ENCODE measurements at regions of chr1 and their contacts with region 1.

Region 1: GRCh38 chr1:220902916-220903315 is 23.7 kb downstream of the HLX start:
- DNase-seq: peak; percentile 25
- ATAC-seq: no peak
- H3K4me3 ChIP-seq: no peak overlapping the region
- H3K27ac ChIP-seq: no peak overlapping the region
- H3K4me1 ChIP-seq: 0 out of 2 replicates have a peak, but pooled peaks cover 2% of the 10 kb centered on the region
- H3K27me3 ChIP-seq: 0 out of 2 replicates have a peak, but pooled peaks cover 2% of the 10 kb centered on the region
- CTCF ChIP-seq: no peak
- POLR2A ChIP-seq: no peak
- RAD21 ChIP-seq: no peak

Region 2: DNA sequence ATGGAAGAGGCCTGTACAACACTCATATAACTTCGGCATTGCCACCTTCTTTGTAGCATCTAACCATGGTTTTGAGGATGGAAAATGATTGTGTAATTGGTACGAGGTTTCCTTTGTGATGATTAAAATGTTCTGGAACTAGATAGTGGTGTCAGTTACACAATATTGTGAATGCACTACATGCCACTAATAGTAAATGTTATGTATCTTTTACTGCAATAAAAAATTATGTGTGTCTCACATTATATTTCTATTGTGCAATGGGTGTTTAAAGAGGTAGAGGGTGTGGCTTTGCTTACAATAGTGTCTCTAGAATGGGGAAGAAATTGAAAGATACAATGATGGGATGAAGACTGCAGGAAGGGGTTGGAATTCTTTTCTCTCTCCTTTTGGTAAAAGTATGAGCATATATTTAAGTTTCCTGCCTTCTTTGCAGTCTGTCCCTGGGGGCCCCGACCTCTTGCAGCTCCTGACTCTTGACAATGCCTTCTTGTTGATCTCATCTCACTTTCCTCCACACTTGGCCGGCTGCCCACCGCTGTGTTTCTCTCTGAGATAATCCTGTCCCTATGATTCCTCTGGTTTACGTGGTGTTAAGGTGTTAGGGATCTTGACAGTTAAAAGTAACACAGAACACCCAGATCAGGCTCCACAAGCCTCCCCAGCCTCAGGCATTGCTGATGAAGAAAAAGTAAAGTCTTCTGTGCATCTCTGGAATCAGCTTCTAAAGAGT is 76.9 kb before region 1 on chr1:
- CTCF ChIA-PET with region 1: no interaction called
- POLR2A ChIA-PET with region 1: no interaction called
- dilution Hi-C with region 1: no loop called
- in situ Hi-C with region 1: no loop called
- intact Hi-C with region 1: no loop called
- DNase-seq: no peak
- ATAC-seq: no peak
- H3K4me3 ChIP-seq: no peak overlapping the region
- H3K27ac ChIP-seq: peak overlapping the region; percentile 12; the same call in 1 of the 2 replicates
- H3K4me1 ChIP-seq: peaks cover 19% of the 10 kb centered on the region
- H3K27me3 ChIP-seq: peaks cover 4% of the 10 kb centered on the region
- CTCF ChIP-seq: no peak
- POLR2A ChIP-seq: no peak
- RAD21 ChIP-seq: no peak

Region 3: DNA sequence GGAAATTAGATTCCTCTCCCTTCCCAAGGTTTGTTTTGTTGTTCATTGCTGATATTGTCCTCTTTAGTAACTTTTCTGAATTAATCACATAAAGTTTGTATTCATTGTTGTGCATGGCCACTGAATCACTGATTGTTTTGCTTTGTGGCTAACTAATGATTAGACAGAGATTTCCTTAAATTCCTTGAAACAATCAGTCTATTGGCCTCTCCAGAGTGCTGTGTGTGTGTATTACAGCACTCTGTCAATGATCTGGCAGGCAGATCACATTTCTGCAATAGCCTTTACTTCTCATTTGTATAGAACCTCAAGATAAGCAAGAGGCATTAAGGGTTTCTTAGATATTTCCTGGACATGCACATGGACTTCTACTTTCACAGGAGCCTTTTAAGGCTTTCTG is 760.4 kb after region 1 on chr1:
- CTCF ChIA-PET with region 1: no interaction called
- POLR2A ChIA-PET with region 1: interaction called, 10 read pairs
- dilution Hi-C with region 1: no loop called
- in situ Hi-C with region 1: no loop called
- intact Hi-C with region 1: no loop called
- DNase-seq: peak; percentile 58
- ATAC-seq: peak; percentile 57
- H3K4me3 ChIP-seq: no peak overlapping the region
- H3K27ac ChIP-seq: no peak overlapping the region
- H3K4me1 ChIP-seq: peaks cover 5% of the 10 kb centered on the region
- H3K27me3 ChIP-seq: no peaks in the 10 kb centered on the region
- CTCF ChIP-seq: no peak
- POLR2A ChIP-seq: no peak
- RAD21 ChIP-seq: no peak

Region 4: GRCh38 chr1:221725735-221726672 is 823.1 kb after region 1 on chr1:
- CTCF ChIA-PET with region 1: no interaction called
- POLR2A ChIA-PET with region 1: no interaction called
- dilution Hi-C with region 1: no loop called
- in situ Hi-C with region 1: no loop called
- intact Hi-C with region 1: no loop called
- DNase-seq: peak; percentile 60
- ATAC-seq: no peak
- H3K4me3 ChIP-seq: no peak overlapping the region
- H3K27ac ChIP-seq: peak overlapping the region; percentile 56; the same call in 1 of the 2 replicates
- H3K4me1 ChIP-seq: peaks cover 46% of the 10 kb centered on the region
- H3K27me3 ChIP-seq: no peaks in the 10 kb centered on the region
- CTCF ChIP-seq: no peak
- POLR2A ChIP-seq: no peak
- RAD21 ChIP-seq: no peak

Measured in IMR-90 (cell line).